Sigmoid colon (tissue), 7 donors: ENCODE measurements at regions of chr10 and their contacts with region 1.

Region 1: DNA sequence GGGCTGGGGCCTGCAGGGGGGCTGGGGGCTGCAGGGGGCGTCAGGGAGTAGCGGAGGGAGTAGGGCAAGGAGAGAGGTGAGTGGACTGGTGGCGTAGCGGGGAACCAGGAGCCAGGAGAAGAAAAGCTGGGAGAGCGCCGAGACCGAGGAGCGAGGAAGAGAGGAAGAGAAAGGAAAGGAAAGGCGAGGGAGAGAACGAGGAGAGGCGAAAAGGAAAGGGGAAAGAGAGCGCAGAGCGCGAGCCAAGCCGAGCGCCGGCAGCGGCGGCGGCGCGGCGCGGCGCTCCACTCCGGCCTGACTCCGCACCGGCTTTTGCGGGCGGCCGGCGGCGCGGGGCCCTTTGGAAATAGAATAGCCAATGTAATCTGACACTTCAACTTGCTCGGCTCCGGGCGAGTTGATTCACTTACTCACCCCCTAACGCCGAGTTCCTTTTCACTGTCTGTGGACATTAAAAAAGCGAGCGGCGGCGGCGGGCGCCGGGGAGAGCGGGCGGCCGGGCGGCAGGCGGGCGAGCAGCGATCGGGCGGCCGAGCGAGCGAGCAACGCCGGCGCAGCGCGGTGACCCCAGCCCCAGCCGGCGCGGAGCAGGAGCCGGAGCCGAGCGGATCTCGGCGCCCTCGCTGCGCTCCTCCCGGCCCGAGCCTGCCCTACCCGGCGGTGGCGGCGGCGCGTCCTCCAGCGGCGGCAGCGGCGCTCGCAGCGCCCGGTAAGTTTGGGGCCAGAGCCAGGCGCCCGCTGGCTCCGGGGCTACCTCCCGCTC is at the start of gene ZMIZ1:
- DNase-seq: peak; percentile 97
- H3K4me3 ChIP-seq: peak within 1 kb of the TSS; percentile 70 to 96 (median 84)
- H3K27ac ChIP-seq: peak within 1 kb of the TSS; percentile 96 to 100 (median 99)
- H3K4me1 ChIP-seq: peaks cover 2 to 47% (median 40%) of the 10 kb centered on the region in 4 donors
- H3K27me3 ChIP-seq: no peaks in the 10 kb centered on the region
- CTCF ChIP-seq: peak in 2 of 4 experiments; percentile 12 to 16
- EP300 ChIP-seq: no peak
- POLR2A ChIP-seq: no peak
- total RNA-seq, gene ZMIZ1: 26.5 to 49.3 (median 37.5) TPM

Region 2: DNA sequence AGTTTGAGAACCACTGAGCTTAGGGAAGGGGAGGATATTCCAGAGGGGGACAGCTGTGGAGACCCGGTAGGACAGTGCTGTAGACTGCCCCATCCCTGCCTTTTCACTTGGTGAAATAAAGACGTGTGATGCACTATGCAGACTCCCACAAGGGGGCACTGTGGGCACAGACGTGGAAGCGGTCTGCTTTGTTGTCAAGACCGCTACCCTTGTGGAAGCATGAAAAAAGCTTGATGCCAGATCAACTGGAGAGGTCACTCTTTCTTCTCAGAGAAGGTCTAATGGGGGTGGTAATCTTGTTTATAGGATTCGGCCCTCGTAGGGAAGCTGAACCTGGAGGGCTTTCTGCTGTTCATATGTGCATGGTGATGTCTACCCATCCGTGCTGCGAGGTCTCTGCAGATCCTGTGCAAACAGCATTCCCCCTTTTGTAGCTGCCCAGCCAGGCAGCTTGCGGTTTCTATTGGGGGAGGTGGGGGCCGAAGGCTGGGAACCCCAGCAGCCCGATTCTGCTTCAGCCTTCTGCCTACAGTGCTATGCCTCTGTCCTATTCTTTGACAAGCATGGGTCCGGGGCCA is 1021.3 kb before region 1 on chr10:
- intact Hi-C with region 1: loop called (anchors 5 kb)
- DNase-seq: peak; percentile 91
- H3K4me3 ChIP-seq: no peak overlapping the region
- H3K27ac ChIP-seq: peak overlapping the region in 1 of 4 donors; percentile 6
- H3K4me1 ChIP-seq: peaks cover 0 to 16% (median 9%) of the 10 kb centered on the region in 4 donors
- H3K27me3 ChIP-seq: no peaks in the 10 kb centered on the region
- CTCF ChIP-seq: peak; percentile 83 to 88 (median 86)
- EP300 ChIP-seq: no peak
- POLR2A ChIP-seq: no peak

Region 3: DNA sequence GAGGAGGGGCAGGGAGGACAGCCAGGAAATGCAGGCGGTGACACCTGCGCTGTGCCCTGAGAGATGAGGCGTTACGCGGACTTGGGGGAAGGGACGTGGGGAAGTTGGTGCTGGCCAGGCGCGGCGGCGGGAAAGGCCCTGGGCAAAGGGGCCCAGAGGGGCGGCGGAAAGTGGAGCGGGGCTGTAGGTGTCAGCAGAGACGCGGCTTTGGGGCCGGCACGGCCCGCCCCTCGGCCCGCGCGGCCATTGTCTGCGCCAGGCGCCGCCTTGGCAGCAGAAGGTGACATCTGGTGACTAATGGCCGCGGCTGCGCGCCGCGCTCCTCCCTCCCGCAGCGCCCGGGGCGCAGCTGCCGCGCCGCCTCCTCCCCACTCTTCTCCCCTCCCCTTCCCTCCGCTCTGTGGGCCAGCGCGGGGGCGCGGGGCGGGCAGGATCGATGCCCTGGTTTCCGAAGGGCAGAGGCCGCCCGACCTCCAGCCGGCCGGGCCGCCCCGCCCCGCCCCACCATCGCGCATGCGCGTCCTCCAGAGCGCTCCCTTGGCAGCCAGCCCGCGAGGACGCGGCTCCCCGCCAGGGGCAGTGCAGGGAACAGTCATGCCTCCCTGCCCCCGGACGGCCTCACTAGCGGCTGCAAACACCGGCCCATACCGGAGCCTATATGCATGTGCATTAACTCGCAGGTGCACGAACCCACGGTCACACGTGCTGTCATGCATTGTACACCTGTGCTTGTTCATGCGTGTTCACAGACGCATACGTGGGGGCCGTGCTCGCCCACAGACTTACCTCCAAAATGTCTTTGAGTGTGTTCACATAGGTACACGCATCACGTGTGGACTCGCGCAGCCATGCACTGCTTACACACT is 765.5 kb before region 1 on chr10:
- intact Hi-C with region 1: loop called (anchors 2 kb)
- DNase-seq: peak; percentile 95
- H3K4me3 ChIP-seq: peak overlapping the region; percentile 35 to 62 (median 52)
- H3K27ac ChIP-seq: peak overlapping the region; percentile 85 to 91 (median 88)
- H3K4me1 ChIP-seq: peaks cover 0 to 54% (median 37%) of the 10 kb centered on the region in 4 donors
- H3K27me3 ChIP-seq: no peaks in the 10 kb centered on the region
- CTCF ChIP-seq: peak; percentile 65 to 80 (median 71)
- EP300 ChIP-seq: peak in 1 of 4 donors; percentile 28
- POLR2A ChIP-seq: peak; percentile 32 to 41

Region 4: GRCh38 chr10:78777466-78777865 is 291.3 kb before region 1 on chr10:
- intact Hi-C with region 1: loop called (anchors 5 kb)
- DNase-seq: peak; percentile 94
- H3K4me3 ChIP-seq: no peak overlapping the region
- H3K27ac ChIP-seq: peak overlapping the region; percentile 48 to 87 (median 84)
- H3K4me1 ChIP-seq: peaks cover 0 to 59% (median 51%) of the 10 kb centered on the region in 4 donors
- H3K27me3 ChIP-seq: no peaks in the 10 kb centered on the region
- CTCF ChIP-seq: no peak
- EP300 ChIP-seq: peak in 3 of 4 donors; percentile 72 to 89 (median 84)
- POLR2A ChIP-seq: no peak

Region 5: GRCh38 chr10:78972947-78973900 is 95.5 kb before region 1 on chr10:
- intact Hi-C with region 1: loop called (anchors 1 kb)
- DNase-seq: peak; percentile 91
- H3K4me3 ChIP-seq: peak overlapping the region; percentile 30 to 57 (median 49)
- H3K27ac ChIP-seq: peak overlapping the region; percentile 94 to 99 (median 96)
- H3K4me1 ChIP-seq: peaks cover 0 to 61% (median 51%) of the 10 kb centered on the region in 4 donors
- H3K27me3 ChIP-seq: no peaks in the 10 kb centered on the region
- CTCF ChIP-seq: peak in 1 of 4 experiments; percentile 10
- EP300 ChIP-seq: peak; percentile 5 to 86 (median 68)
- POLR2A ChIP-seq: peak in 1 of 2 donors; percentile 14

Region 6: DNA sequence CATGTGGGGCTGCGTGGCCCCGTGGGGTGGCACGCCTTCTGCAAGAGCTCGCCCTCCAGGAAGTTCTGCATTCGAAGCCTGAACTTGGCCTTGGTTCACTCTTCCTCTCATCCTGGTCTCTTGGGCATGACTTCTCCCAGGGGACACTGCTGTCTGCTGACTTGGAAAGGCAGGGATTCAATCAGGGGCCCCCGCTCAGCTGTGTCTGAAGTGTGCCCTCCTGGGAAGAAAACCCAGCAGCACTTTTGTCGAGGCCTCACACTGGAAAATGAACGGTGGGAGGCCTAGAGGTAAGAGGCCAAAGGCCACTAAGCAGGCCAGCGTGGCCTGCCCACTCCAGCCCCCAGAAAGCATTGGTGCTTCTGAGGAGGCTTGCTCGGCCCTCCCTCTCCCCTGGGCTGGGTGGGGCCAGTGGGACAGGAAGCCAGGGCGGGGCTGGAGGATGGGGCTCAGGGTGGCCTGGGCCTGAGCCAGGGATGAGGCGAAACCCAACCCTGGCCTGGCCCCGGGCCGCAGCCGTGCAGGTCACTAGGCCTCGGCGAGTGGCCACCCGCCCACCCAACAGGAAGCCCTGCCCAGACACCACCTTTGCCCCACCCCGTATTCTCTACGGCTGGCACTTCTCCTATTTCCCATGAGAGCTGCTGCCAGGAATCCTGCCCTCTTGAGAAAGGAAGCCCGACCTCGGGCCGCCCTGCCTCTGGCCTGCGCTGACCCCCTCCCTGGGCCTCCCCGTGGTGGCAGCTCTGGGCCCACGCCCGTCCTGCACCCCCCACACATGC is 81.1 kb after region 1 on chr10:
- intact Hi-C with region 1: loop called (anchors 2 kb)
- DNase-seq: peak; percentile 92
- H3K4me3 ChIP-seq: no peak overlapping the region
- H3K27ac ChIP-seq: peak overlapping the region; percentile 85 to 92 (median 88)
- H3K4me1 ChIP-seq: peaks cover 0 to 100% (median 96%) of the 10 kb centered on the region in 4 donors
- H3K27me3 ChIP-seq: no peaks in the 10 kb centered on the region
- CTCF ChIP-seq: no peak
- EP300 ChIP-seq: no peak
- POLR2A ChIP-seq: no peak

Region 7: DNA sequence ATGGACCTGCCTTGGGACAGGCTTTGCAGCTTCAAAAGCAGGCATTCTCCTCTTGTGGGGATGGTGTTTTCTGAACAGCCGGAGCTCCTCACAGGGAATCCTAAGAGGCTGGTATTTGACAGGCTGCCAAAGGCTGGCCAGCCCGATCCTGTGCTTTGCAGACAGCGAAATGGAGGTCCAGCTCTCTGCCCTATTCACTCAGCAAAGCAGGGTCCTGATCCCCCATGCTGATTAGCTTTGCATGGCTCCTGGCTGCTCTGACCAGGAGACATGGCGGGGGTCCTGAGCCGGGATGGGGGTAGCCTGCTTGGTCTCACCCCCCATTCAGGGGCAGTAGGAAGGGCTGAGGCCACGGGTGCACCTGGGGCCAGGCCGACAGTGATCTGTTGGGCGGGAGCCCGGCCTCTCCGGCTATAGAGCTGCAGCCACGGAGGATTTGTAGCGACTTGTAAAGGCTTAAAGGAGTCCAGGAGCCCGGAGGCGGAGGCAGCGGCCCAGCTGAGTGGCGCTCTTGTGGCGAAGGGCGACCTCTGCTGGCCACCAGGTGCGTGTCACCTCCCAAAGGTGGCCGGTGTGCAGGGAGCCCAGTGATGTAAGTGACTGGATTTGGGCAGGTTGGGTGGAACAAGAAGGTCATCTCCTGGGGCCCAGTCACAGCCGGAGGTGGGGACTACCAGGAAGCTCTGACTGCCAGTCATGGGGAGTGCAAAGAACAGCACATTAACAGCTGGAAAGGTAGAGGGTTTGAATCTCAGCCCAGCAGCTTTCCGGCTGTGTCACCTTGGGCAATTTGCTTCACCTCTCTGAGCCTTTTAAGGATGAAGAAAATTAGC is 126.6 kb after region 1 on chr10:
- intact Hi-C with region 1: loop called (anchors 1 kb)
- DNase-seq: peak; percentile 95
- H3K4me3 ChIP-seq: no peak overlapping the region
- H3K27ac ChIP-seq: peak overlapping the region; percentile 78 to 86 (median 80)
- H3K4me1 ChIP-seq: peaks cover 0 to 51% (median 48%) of the 10 kb centered on the region in 4 donors
- H3K27me3 ChIP-seq: no peaks in the 10 kb centered on the region
- CTCF ChIP-seq: peak; percentile 92 to 97 (median 94)
- EP300 ChIP-seq: peak in 1 of 4 donors; percentile 17
- POLR2A ChIP-seq: no peak